ENCODE measurements at regions of chr5 and their contacts with region 1.

Region 1: DNA sequence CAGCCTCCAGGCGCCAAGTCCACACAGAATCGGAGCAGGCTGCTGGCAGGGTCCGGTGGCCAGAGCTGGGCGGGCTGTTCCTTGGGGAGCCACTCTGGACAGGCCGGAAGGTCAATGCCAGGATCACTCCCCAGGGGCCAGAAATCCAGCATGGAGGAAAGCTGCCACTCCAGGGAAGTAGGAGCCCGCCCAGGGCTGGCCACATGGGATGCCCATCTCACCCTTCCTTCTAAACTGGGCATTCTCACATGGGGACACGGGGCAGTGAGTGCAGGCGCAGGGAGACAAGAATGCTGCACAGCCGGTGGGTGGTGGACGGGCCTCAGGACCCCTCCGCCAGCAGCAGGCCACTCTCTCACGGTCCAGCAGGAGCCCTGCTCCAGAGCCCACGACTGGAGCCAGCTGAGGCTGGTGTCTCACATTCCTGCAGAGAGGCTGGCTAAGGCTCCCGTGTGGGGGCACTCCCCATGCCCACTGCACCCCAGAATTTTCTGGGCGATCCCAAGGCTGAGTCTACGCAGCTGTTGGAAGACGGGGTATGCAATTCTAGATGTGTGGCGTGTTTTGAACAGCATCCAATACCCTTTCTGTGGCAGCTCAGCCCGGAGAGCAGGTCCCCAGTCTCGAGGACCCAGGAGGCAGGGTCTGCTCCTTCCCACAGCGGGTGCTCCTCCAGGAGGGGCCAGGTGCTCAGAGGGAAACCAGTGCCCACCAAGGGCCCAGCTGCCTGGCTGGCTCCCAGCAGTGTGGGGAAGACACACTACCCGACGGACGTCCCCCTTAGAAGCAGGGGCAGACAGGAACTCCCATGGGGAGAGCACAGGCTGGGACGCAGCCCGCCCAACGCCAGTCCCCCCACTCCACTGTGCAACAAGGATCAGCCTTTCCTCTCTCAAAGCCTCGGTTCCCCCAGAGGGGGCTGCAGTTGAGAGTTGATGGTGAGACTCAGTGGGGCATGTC is 57.9 kb downstream of the ADAMTS2 start:
- DNase-seq: no peak
- H3K4me3 ChIP-seq: no peak overlapping the region
- H3K27ac ChIP-seq: no peak overlapping the region
- H3K4me1 ChIP-seq: peaks cover 0 to 5% (median 2%) of the 10 kb centered on the region in 4 donors
- H3K27me3 ChIP-seq: no peaks in the 10 kb centered on the region
- CTCF ChIP-seq: no peak
- EP300 ChIP-seq: no peak
- POLR2A ChIP-seq: no peak

Region 2: GRCh38 chr5:179166886-179167841 is 120.2 kb before region 1 on chr5:
- in situ Hi-C with region 1: no loop called
- intact Hi-C with region 1: no loop called
- DNase-seq: peak; percentile 34
- H3K4me3 ChIP-seq: peak overlapping the region in 2 of 4 donors; percentile 9 to 25
- H3K27ac ChIP-seq: no peak overlapping the region
- H3K4me1 ChIP-seq: peaks cover 0 to 10% (median 4%) of the 10 kb centered on the region in 4 donors
- H3K27me3 ChIP-seq: no peaks in the 10 kb centered on the region
- CTCF ChIP-seq: peak; percentile 47 to 93 (median 88)
- EP300 ChIP-seq: no peak
- POLR2A ChIP-seq: no peak

Region 3: DNA sequence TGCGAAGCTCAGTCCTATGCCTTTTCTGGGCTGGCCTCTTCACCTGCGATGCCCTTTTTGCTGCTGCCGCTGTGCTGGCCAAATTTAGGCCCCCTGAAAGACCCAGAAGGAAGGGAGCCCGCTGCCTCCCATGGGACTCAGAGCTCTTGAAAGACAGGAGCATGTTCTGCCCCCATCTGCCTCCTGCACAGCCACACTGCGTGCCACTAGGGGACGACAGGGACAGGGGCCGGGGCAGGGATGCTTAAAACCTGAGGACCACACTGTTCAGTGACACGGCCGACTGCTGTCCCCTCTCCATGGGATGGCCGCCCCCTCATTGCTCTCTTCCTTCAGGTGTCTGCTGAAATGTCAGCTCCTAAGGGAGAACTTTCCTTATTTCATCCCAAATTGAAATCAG is 74.5 kb before region 1 on chr5:
- in situ Hi-C with region 1: no loop called
- intact Hi-C with region 1: no loop called
- DNase-seq: no peak
- H3K4me3 ChIP-seq: no peak overlapping the region
- H3K27ac ChIP-seq: no peak overlapping the region
- H3K4me1 ChIP-seq: no peaks in the 10 kb centered on the region
- H3K27me3 ChIP-seq: no peaks in the 10 kb centered on the region
- CTCF ChIP-seq: peak in 1 of 5 experiments; percentile 22
- EP300 ChIP-seq: no peak
- POLR2A ChIP-seq: no peak

Region 4: GRCh38 chr5:179304871-179305270 is 17.5 kb after region 1 on chr5:
- in situ Hi-C with region 1: no loop called
- intact Hi-C with region 1: loop called (anchors 1 kb)
- DNase-seq: no peak
- H3K4me3 ChIP-seq: no peak overlapping the region
- H3K27ac ChIP-seq: peak overlapping the region in 2 of 4 donors; percentile 24 to 28
- H3K4me1 ChIP-seq: no peaks in the 10 kb centered on the region
- H3K27me3 ChIP-seq: no peaks in the 10 kb centered on the region
- CTCF ChIP-seq: no peak
- EP300 ChIP-seq: no peak
- POLR2A ChIP-seq: no peak

Region 5: DNA sequence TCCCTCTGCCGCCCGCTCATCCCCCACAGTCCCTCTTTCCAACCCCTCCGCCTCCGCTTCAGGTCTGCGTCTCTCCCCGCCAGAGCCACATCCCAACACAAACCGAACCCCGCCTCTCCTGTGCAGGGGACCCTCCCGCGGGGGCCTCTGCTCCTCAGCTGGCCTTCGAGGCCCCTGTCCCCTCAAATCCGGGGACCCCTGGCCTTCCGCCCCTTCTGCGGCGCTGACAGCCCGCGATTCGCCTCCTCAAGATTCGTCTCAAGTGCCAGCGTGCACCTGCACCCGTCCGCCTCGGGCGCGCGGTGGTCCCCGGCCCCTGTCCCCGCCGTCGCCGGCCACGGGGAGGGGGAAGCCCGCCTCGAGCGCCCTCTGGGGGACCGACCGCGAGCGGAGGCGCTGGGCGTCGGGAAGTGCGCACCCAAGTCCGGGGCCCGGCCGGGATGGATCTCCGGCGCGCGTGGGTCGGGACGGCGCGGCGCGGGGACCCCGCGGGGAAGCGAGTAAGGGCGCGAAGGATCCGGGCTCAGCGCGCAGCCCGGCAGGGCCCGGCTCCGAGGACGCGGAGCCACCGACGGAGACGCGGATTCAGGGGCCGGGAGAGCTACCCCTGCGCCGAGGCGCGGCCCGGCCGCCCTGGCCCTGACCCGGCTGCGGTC is 1361.4 kb after region 1 on chr5:
- in situ Hi-C with region 1: no loop called
- intact Hi-C with region 1: no loop called
- DNase-seq: no peak
- H3K4me3 ChIP-seq: peak overlapping the region in 3 of 4 donors; percentile 12 to 43 (median 28)
- H3K27ac ChIP-seq: no peak overlapping the region
- H3K4me1 ChIP-seq: peaks cover 0 to 16% (median 11%) of the 10 kb centered on the region in 4 donors
- H3K27me3 ChIP-seq: peaks cover 65% of the 10 kb centered on the region
- CTCF ChIP-seq: no peak
- EP300 ChIP-seq: no peak
- POLR2A ChIP-seq: no peak